Right cardiac atrium (tissue), 5 donors: ENCODE measurements at regions of chr6 and their contacts with region 1.

Region 1: DNA sequence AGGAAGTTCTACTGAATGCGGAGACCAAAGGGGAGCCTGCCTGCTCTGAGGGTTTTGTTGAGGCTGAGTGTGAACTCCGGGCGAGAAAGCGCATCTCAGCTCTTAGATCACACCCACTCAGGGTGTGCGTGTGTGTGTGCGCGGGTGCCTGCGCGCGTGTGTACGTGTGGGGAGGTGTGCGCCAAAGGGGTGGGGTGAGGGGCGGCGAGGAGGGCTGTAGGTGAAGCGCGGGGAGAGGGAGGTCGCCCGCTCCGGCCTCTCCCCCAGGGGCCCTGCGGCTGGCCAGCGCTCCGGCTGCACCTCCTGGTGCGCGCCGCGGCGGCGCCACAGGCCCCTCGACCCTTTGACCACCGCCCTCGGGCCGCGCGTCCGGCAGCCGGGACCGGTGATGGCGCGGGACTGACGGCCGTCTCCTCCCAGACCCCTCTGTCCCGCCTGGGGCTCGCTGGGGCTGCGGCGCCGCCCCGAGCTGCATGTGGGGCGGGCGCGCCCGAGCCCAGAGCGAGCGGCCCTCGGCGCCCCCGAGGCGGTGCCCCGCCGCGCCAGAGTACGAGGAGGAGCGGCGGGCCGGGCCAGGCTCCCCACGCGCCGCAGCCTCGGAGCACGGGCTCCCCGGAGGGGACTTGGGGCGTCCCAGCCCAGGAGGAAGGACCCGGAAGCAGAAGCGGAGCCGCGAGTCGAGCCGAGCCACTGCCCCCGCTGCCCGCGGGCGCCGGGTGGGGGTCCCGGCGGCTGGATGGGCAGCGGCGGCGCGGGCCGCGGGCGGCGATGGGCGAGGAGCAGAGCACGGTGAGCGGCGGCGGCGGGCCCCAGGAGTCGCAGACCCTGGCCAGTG is at the start of gene RNF217:
- DNase-seq: peak; percentile 72 to 91 (median 89)
- ATAC-seq: peak; percentile 87
- H3K4me3 ChIP-seq: peak within 1 kb of the TSS; percentile 95
- H3K27ac ChIP-seq: peak within 1 kb of the TSS; percentile 94
- H3K4me1 ChIP-seq: peaks cover under 1% of the 10 kb centered on the region
- H3K27me3 ChIP-seq: no peaks in the 10 kb centered on the region
- total RNA-seq, gene RNF217: 12.2 to 23.6 (median 17.6) TPM

Region 2: GRCh38 chr6:124870611-124871459 is 91.2 kb before region 1 on chr6:
- intact Hi-C with region 1: loop called in 1 of 4 experiments (anchors 10 kb)
- DNase-seq: no peak
- ATAC-seq: no peak
- H3K4me3 ChIP-seq: no peak overlapping the region
- H3K27ac ChIP-seq: no peak overlapping the region
- H3K4me1 ChIP-seq: no peaks in the 10 kb centered on the region
- H3K27me3 ChIP-seq: no peaks in the 10 kb centered on the region

Region 3: DNA sequence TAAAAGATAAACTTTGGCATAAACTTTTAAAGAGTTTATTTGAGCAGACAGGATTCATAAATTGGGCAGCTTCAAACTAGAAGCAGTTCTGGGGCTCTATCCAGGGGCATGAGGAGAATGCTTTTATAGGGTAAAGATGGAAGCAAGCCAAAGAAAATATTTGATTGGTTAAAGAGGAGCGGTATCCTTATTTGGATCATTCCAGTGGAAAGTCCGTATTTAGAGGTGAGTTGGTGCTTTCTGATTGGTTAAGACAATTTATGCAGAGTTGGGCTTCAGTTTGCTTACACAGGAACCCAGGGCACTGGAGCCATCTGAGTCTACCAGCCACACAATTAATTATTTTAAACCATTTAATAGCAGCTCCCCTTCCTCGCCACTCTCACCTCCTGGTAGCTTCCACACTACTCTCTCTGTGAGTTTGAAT is 37.6 kb before region 1 on chr6:
- intact Hi-C with region 1: no loop called
- DNase-seq: no peak
- ATAC-seq: no peak
- H3K4me3 ChIP-seq: no peak overlapping the region
- H3K27ac ChIP-seq: no peak overlapping the region
- H3K4me1 ChIP-seq: no peaks in the 10 kb centered on the region
- H3K27me3 ChIP-seq: no peaks in the 10 kb centered on the region

Region 4: GRCh38 chr6:125099211-125100073 is 137.4 kb after region 1 on chr6:
- intact Hi-C with region 1: loop called in 2 of 4 experiments (anchors 10 kb)
- DNase-seq: peak; percentile 63 to 86 (median 83)
- ATAC-seq: peak; percentile 92 to 94
- H3K4me3 ChIP-seq: peak overlapping the region; percentile 69
- H3K27ac ChIP-seq: no peak overlapping the region
- H3K4me1 ChIP-seq: no peaks in the 10 kb centered on the region
- H3K27me3 ChIP-seq: no peaks in the 10 kb centered on the region